MCF 10A (cell line): ENCODE measurements at regions of chr11 and their contacts with region 1.

Region 1: DNA sequence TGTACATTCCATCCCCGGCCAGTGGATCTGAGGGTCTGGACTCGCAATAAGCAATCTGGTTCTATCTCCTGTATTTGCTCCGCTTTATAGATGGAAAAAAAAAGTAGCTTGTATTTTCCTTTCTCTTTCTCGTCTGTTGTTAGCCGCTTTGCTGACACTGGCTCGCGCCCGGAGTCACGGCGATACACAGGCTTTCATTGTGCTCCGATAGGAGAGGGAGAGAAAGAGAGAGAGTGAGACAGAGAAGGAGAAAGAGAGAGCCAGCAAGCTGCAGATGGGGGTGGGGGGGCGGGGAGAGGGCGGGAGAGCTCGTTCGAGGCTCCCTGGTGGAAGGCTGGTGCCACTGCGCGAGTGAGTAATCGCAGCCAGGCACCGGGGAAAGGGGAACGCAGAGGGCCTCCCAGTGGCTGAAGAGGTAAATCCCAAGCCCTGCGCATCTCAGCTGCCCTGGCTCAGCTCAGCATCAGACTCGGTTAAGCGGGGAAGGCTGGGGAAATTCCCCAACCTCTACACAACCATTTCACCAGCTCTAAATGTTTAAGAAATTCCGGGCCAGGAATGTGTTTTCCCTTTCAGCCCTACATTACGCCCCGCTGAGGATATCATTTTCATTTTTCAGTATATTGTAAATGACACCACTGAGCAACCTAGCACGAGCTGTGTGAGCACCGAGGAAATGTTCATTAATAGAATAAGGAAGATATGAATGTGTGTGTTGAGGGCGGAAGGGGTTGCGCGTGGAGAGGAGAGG is at the start of gene MAML2:
- DNase-seq: peak; percentile 93
- H3K4me3 Mint-ChIP-seq: peak within 1 kb of the TSS; percentile 95
- H3K27ac Mint-ChIP-seq: peak within 1 kb of the TSS; percentile 94
- H3K4me1 Mint-ChIP-seq: peaks cover 35% of the 10 kb centered on the region
- H3K27me3 Mint-ChIP-seq: no peaks in the 10 kb centered on the region
- CTCF ChIP-seq: peak; percentile 97
- total RNA-seq, gene MAML2: 5.3 and 8.6 TPM in 2 replicates

Region 2: GRCh38 chr11:95923728-95924413 is 419.3 kb before region 1 on chr11 and contains the start of gene MTMR2:
- CTCF ChIA-PET with region 1: interaction called, 9 read pairs
- POLR2A ChIA-PET with region 1: interaction called, 5 read pairs
- intact Hi-C with region 1: loop called (anchors 5 kb)
- DNase-seq: peak; percentile 64
- H3K4me3 Mint-ChIP-seq: peak within 1 kb of the TSS; percentile 84
- H3K27ac Mint-ChIP-seq: peak within 1 kb of the TSS; percentile 95
- H3K4me1 Mint-ChIP-seq: peaks cover 21% of the 10 kb centered on the region
- H3K27me3 Mint-ChIP-seq: no peaks in the 10 kb centered on the region
- CTCF ChIP-seq: no peak
- total RNA-seq, gene MTMR2: 49.8 and 51.9 TPM in 2 replicates

Region 3: DNA sequence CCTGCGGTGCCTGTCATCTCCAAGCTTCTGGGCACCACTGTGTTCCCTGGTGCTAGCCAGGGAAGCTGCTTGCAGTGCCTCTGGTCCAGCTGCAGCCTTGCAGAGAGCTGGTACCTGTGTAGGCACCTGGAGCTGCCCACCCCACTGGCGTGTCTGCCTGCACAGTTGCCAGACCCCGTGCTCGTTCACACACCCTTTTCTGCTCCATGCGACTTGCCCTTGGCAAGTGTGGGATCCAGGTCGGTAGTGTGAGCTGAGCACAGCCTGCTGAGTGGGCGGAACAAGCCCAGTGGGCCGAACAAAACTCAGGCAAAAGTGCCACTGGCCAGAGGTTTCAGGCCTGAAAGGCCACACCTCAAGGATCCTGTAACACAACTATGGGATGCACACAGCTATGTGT is 272.7 kb before region 1 on chr11:
- CTCF ChIA-PET with region 1: interaction called, 12 read pairs
- POLR2A ChIA-PET with region 1: interaction called, 3 read pairs
- intact Hi-C with region 1: no loop called
- DNase-seq: no peak
- H3K4me3 Mint-ChIP-seq: no peak overlapping the region
- H3K27ac Mint-ChIP-seq: no peak overlapping the region
- H3K4me1 Mint-ChIP-seq: peaks cover 3% of the 10 kb centered on the region
- H3K27me3 Mint-ChIP-seq: no peaks in the 10 kb centered on the region
- CTCF ChIP-seq: no peak

Region 4: GRCh38 chr11:96162816-96163499 is 180.2 kb before region 1 on chr11:
- CTCF ChIA-PET with region 1: interaction called, 37 read pairs
- POLR2A ChIA-PET with region 1: interaction called, 9 read pairs
- intact Hi-C with region 1: no loop called
- DNase-seq: peak; percentile 86
- H3K4me3 Mint-ChIP-seq: no peak overlapping the region
- H3K27ac Mint-ChIP-seq: peak overlapping the region; percentile 7
- H3K4me1 Mint-ChIP-seq: peaks cover 28% of the 10 kb centered on the region
- H3K27me3 Mint-ChIP-seq: no peaks in the 10 kb centered on the region
- CTCF ChIP-seq: no peak

Region 5: GRCh38 chr11:96254087-96254486 is 89.0 kb before region 1 on chr11:
- CTCF ChIA-PET with region 1: interaction called, 18 read pairs
- POLR2A ChIA-PET with region 1: interaction called, 7 read pairs
- intact Hi-C with region 1: no loop called
- DNase-seq: no peak
- H3K4me3 Mint-ChIP-seq: peak overlapping the region; percentile 46
- H3K27ac Mint-ChIP-seq: peak overlapping the region; percentile 72
- H3K4me1 Mint-ChIP-seq: peaks cover 47% of the 10 kb centered on the region
- H3K27me3 Mint-ChIP-seq: no peaks in the 10 kb centered on the region
- CTCF ChIP-seq: no peak

Region 6: DNA sequence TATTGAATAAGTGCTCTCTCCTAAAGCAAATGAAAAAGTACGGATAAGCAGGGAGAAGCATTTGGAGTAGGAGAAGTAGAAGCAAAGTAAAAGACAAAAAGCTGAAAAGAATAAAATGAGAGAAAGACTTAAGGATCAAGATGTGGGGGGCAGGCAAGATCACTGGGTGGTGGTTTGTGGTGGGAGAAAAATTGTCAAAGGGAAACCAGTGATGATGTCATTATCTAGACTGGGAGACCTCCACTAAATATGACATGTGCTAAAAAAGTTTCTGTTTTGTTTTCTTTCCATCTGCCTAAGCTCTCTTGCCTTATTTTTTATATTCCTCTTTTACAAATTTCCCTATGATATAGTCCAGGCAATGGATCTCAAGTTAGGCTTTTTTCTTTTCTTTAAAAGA is 14.7 kb after region 1 on chr11:
- CTCF ChIA-PET with region 1: interaction called, 18 read pairs
- POLR2A ChIA-PET with region 1: interaction called, 3 read pairs
- intact Hi-C with region 1: no loop called
- DNase-seq: no peak
- H3K4me3 Mint-ChIP-seq: no peak overlapping the region
- H3K27ac Mint-ChIP-seq: no peak overlapping the region
- H3K4me1 Mint-ChIP-seq: no peaks in the 10 kb centered on the region
- H3K27me3 Mint-ChIP-seq: no peaks in the 10 kb centered on the region
- CTCF ChIP-seq: no peak